Right ventricle myocardium superior (tissue), 1 donor: ENCODE measurements at regions of chr17 and their contacts with region 1.

Region 1: GRCh38 chr17:45894022-45894784 is at the start of gene MAPT:
- DNase-seq: peak; percentile 94
- ATAC-seq: peak; percentile 98
- total RNA-seq, gene MAPT: 37.7 TPM

Region 2: GRCh38 chr17:45948881-45949624 is 54.9 kb after region 1 on chr17:
- intact Hi-C with region 1: loop called (anchors 5 kb)
- DNase-seq: peak; percentile 89
- ATAC-seq: peak; percentile 93